SK-N-SH (cell line): ENCODE measurements at regions of chr10 and their contacts with region 1.

Region 1: DNA sequence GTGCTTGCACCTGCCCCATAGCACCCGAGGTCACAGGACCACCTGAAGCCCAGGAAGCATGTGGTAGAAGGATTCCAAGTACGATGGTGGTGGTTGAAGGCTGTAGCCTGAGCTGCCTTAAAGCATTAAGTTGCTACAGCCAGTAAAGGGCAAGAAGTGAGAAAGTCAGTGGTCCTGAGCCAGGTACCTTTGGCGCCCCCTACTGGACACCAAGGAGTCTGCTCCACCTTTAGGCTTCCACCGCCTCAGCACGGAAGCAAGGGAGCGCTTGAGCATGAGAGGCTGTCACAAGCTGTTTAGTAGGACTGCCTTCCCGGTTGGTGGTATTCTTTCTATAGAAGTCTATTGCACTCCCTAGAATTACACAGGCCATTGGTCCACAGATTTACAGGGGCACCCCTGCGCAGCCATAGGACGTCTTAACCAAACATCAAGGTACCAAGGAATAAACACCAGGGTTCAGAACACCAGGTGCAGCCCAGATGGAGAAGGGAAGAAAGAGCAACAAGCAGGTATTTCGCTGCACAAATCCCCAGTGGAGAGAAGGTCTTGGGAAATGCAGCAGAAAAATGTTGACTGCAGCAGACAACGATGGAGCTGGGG is 2.2 kb downstream of the CRTAC1 start:
- DNase-seq: peak; percentile 75
- H3K4me3 ChIP-seq: peak overlapping the region in 1 of 2 experiments; percentile 36; a peak in 1 of 4 replicates
- H3K27ac ChIP-seq: no peak overlapping the region
- H3K4me1 ChIP-seq: peaks cover 0 to 8% of the 10 kb centered on the region in 2 experiments; a peak in 1 of 4 replicates
- H3K27me3 ChIP-seq: peaks cover 27% of the 10 kb centered on the region
- CTCF ChIP-seq: peak; percentile 63
- EP300 ChIP-seq: no peak
- RAD21 ChIP-seq: peak; percentile 53

Region 2: DNA sequence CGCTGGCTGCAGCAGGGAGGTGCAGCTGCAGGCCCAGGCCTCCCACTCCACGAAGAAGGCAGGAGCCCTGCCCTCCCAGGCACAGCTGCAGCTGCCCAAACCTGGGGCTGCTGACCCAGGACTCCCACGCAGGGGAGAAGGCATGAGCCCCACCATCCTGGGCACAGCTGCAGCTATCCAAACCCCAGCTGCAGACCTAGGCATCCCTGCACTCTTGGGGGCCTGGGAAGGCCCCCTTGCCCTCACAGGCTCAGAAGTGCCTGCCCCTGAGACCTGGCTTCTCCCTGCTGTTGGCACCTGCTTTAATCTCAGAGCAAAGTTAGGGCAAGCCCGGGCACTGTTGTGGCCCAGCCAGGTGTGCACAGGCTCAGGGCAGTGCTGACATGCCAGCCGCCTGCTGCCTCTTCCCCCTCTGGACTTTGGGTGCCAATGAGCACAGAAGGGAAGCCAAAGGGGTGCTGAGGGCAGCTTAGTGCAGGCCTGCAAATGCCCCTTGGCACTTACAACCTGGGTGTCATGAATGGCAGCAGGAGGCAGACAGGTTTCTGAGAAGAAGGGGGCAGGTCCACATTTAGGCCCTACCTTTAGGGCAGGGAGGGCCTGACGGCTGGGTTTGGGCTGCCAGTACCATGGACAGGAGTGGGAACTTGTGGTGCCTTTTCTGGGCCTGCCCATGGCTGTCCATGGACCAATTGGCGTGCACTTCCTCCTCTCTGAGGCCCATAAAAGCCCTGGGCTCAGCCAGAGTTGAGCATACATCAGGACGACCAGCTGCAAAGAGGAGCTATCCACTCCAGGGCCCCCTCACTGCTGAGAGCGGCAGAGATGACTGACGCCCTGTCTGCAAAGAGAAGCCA is 29.0 kb before region 1 on chr10:
- CTCF ChIA-PET with region 1: interaction called, 12 read pairs
- POLR2A ChIA-PET with region 1: no interaction called
- DNase-seq: no peak
- H3K4me3 ChIP-seq: no peak overlapping the region
- H3K27ac ChIP-seq: no peak overlapping the region
- H3K4me1 ChIP-seq: no peaks in the 10 kb centered on the region
- H3K27me3 ChIP-seq: no peaks in the 10 kb centered on the region
- CTCF ChIP-seq: no peak
- EP300 ChIP-seq: no peak
- RAD21 ChIP-seq: no peak

Region 3: DNA sequence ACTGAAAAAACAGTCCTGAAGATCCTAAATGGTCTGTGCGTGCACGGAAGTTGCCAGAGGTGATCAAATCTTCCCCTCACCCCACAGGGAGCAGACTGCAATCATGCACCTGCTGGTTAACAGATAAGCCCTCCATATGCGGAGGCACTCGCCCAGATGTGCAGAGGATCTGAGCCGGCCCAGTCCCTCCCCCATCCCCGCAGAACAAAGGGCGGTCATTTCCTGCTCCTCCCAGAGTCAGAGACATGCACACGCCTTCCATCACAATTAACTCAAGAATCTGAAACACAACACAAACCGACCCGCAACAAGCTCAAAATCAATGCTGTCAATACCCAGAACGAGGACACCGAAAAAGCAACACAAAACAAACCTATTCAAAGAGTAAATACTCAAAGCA is 22.0 kb before region 1 on chr10:
- CTCF ChIA-PET with region 1: interaction called, 12 read pairs
- POLR2A ChIA-PET with region 1: no interaction called
- DNase-seq: peak; percentile 55
- H3K4me3 ChIP-seq: no peak overlapping the region
- H3K27ac ChIP-seq: no peak overlapping the region
- H3K4me1 ChIP-seq: peaks cover 0 to 4% of the 10 kb centered on the region in 2 experiments; a peak in 2 of 4 replicates
- H3K27me3 ChIP-seq: no peaks in the 10 kb centered on the region
- CTCF ChIP-seq: no peak
- EP300 ChIP-seq: peak in 1 of 2 experiments; percentile 38; a peak in 1 of 4 replicates
- RAD21 ChIP-seq: no peak

Region 4: GRCh38 chr10:98013122-98013521 is 15.1 kb before region 1 on chr10:
- CTCF ChIA-PET with region 1: interaction called, 69 read pairs
- POLR2A ChIA-PET with region 1: interaction called, 3 read pairs
- DNase-seq: no peak
- H3K4me3 ChIP-seq: no peak overlapping the region
- H3K27ac ChIP-seq: no peak overlapping the region
- H3K4me1 ChIP-seq: no peaks in the 10 kb centered on the region; a peak in 1 of 4 replicates
- H3K27me3 ChIP-seq: no peaks in the 10 kb centered on the region
- CTCF ChIP-seq: no peak
- EP300 ChIP-seq: no peak
- RAD21 ChIP-seq: no peak

Region 5: GRCh38 chr10:98038288-98038687 is 10.0 kb after region 1 on chr10:
- CTCF ChIA-PET with region 1: interaction called, 176 read pairs
- POLR2A ChIA-PET with region 1: interaction called, 8 read pairs
- DNase-seq: no peak
- H3K4me3 ChIP-seq: no peak overlapping the region
- H3K27ac ChIP-seq: no peak overlapping the region
- H3K4me1 ChIP-seq: peaks cover 0 to 7% of the 10 kb centered on the region in 2 experiments; a peak in 1 of 4 replicates
- H3K27me3 ChIP-seq: peaks cover 30% of the 10 kb centered on the region; the same call in 1 of the 2 replicates
- CTCF ChIP-seq: no peak
- EP300 ChIP-seq: no peak
- RAD21 ChIP-seq: no peak

Region 6: GRCh38 chr10:98172073-98172472 is 143.8 kb after region 1 on chr10:
- CTCF ChIA-PET with region 1: no interaction called
- POLR2A ChIA-PET with region 1: no interaction called
- DNase-seq: no peak
- H3K4me3 ChIP-seq: no peak overlapping the region
- H3K27ac ChIP-seq: no peak overlapping the region
- H3K4me1 ChIP-seq: no peaks in the 10 kb centered on the region
- H3K27me3 ChIP-seq: no peaks in the 10 kb centered on the region
- CTCF ChIP-seq: no peak
- EP300 ChIP-seq: no peak
- RAD21 ChIP-seq: no peak